Dorsolateral prefrontal cortex (tissue), 120 donors: ENCODE measurements at regions of chr17 and their contacts with region 1.

Region 1: DNA sequence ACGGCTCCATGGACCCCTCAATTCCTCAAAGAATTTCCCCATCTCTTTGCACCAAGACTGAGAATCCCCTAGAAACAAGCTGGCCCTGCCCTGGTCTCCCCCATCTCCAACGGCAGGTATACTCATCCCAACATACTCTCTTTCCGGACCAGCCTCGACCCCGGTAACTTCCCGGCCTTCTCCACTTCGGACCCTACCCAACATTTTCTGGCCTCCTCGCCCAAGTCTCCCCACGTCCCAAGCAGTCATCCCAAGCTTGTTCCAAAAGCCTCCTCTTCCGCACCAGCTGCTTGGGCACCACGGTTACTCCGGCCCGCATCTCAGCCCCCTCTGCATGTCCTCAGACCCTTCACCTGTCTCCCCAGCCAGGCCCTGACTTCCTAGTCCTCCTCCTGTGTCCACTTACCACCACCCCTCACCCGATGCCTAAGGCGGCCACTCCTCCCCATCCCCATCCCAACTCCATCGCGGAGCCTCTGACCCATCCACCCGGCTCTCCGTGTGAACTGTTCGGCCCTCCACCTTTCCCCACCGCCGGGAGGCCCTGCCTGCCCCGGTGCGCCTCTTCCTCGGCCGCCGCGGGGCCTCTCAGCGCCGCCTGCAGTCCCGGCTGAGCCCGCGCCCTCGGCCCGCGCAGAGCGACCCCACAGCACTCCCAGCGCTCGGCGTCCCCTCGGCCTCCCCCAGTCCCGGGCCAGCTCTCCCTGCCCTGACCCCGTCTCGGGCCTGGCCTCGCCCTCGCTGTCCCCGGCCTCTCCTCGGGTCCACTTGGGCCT is 1.0 kb downstream of the PITPNA start:
- DNase-seq: no peak
- H3K4me3 ChIP-seq: peak overlapping the region; percentile 49 to 94 (median 75)
- H3K27ac ChIP-seq: peak overlapping the region in 51 of 59 donors; percentile 9 to 91 (median 69)
- H3K27me3 ChIP-seq: no peaks in the 10 kb centered on the region
- CTCF ChIP-seq: peak in 9 of 56 donors; percentile 6 to 27 (median 12)

Region 2: GRCh38 chr17:2041561-2042366 is 480.2 kb after region 1 on chr17 and contains the start of gene OVCA2:
- intact Hi-C with region 1: loop called in 1 of 2 experiments (anchors 10 kb)
- DNase-seq: peak; percentile 88 to 97 (median 94)
- H3K4me3 ChIP-seq: peak within 1 kb of the TSS; percentile 56 to 92 (median 82)
- H3K27ac ChIP-seq: peak within 1 kb of the TSS; percentile 43 to 96 (median 89)
- H3K27me3 ChIP-seq: no peaks in the 10 kb centered on the region
- CTCF ChIP-seq: peak; percentile 43 to 88 (median 73)
- total RNA-seq, gene OVCA2: 6.6 to 29.4 (median 16.4) TPM